ENCODE measurements at regions of chr18 and their contacts with region 1.

Region 1: GRCh38 chr18:55234366-55235093 is 275.3 kb upstream of the CCDC68 start:
- DNase-seq: peak; percentile 52
- H3K4me3 ChIP-seq: no peak overlapping the region; a peak in 1 of 4 replicates
- H3K27ac ChIP-seq: peak overlapping the region in 1 of 2 experiments; percentile 80; a peak in 2 of 4 replicates
- H3K4me1 ChIP-seq: peaks cover 6 to 21% of the 10 kb centered on the region in 2 experiments; a peak in 3 of 4 replicates
- H3K27me3 ChIP-seq: no peaks in the 10 kb centered on the region
- CTCF ChIP-seq: peak; percentile 89
- EP300 ChIP-seq: no peak; a peak in 1 of 4 replicates
- RAD21 ChIP-seq: peak; percentile 96

Region 2: DNA sequence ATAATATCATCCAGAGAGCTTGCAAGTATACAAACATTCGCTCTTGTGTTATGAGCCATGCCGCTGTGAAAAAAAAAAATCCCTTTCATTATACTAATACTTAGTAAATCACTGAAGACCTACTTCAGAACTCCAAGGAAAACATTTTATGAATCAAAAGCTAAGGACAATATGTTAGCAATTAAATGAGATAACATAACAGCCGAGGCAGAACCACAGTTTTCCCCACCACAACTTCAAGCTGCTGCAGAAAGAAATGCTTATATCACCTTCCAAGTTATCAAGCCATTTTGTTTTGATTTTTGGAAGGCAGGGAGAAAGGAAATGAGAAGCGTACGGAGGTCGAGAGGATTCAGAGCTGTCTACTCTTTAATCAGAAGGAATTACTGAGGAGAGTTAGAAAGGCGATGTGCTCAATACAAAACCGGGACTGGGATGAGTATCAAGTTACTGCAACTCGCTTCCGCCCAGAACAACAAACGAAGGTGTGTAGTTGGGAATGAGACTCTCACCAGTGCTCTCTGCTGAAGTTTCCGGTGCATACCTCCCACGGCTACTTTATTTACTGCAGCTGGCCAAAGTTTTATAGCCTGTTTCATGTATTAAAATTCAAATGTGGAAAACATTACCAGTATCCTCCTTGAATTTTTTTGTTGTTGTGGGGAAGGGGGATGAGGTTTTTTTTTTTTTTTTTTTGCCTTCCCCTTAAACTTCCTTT is 16.9 kb after region 1 on chr18:
- CTCF ChIA-PET with region 1: interaction called, 27 read pairs
- POLR2A ChIA-PET with region 1: no interaction called
- DNase-seq: no peak
- H3K4me3 ChIP-seq: no peak overlapping the region; a peak in 1 of 4 replicates
- H3K27ac ChIP-seq: peak overlapping the region; percentile 87 to 90
- H3K4me1 ChIP-seq: peaks cover 32 to 48% of the 10 kb centered on the region in 2 experiments
- H3K27me3 ChIP-seq: no peaks in the 10 kb centered on the region
- CTCF ChIP-seq: no peak
- EP300 ChIP-seq: no peak
- RAD21 ChIP-seq: no peak

Region 3: DNA sequence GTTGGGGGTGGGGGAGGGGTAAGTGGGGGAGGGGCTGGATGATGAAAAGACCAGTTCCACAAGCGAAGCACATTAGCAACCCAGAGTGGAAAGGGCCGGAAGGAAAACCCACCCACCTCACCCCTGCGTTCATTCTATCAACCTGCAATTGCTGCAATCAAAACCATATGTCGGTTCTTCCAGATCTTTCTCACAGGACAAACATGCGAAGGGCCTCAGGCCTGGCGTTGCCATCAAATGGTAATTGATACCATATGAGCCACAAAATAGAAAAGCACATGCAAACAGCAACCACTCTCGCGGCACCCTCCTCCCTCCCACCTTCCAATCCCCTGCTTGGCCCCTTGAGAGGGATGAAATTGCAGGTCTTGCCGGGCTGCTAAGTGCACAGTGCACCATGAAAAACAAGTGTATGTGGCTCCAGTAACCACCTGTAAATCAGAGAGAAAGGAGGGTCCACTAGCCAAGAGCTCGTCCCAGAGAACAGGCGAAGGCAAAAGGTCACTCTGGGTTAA is 65.9 kb after region 1 on chr18:
- CTCF ChIA-PET with region 1: interaction called, 28 read pairs
- POLR2A ChIA-PET with region 1: interaction called, 7 read pairs
- DNase-seq: peak; percentile 65
- H3K4me3 ChIP-seq: peak overlapping the region; percentile 46 to 66
- H3K27ac ChIP-seq: peak overlapping the region; percentile 92 to 100
- H3K4me1 ChIP-seq: peaks cover 14 to 67% of the 10 kb centered on the region in 2 experiments; a peak in 3 of 4 replicates
- H3K27me3 ChIP-seq: no peaks in the 10 kb centered on the region
- CTCF ChIP-seq: no peak
- EP300 ChIP-seq: peak; percentile 83 to 94
- RAD21 ChIP-seq: no peak; the same call in 1 of the 2 replicates

Region 4: DNA sequence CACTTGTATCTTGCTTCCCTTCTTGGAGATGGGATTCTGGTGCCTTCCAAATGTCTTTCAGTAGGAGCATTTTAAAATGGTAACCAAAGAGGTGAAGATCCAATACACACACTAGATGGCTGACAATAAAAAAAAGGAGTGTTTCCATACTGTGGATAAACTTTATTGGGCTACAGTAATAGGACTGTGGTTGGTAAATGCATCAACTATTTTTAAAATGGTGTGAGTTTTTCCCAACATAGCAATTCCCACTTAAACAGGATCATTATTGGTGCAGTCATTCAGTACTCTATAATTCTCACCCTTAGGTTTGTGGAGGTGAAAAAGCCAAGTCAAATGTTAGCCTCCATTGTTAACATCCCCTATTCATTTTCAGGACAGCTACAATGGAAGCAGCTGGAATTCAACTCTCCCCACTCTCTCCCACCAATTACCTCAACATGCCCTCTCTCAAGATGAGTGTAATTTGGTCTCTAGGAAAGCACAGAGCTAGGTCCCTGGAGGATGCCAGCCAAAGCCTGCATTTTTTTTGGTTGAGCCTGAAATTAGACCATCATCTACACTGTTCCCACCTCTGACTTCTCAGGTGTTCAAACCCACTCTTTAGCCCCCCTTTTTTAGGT is 80.2 kb after region 1 on chr18:
- CTCF ChIA-PET with region 1: interaction called, 33 read pairs
- POLR2A ChIA-PET with region 1: interaction called, 7 read pairs
- DNase-seq: no peak
- H3K4me3 ChIP-seq: no peak overlapping the region
- H3K27ac ChIP-seq: peak overlapping the region; percentile 95 to 100; a peak in 3 of 4 replicates
- H3K4me1 ChIP-seq: peaks cover 38 to 65% of the 10 kb centered on the region in 2 experiments; a peak in 3 of 4 replicates
- H3K27me3 ChIP-seq: no peaks in the 10 kb centered on the region
- CTCF ChIP-seq: no peak
- EP300 ChIP-seq: no peak
- RAD21 ChIP-seq: no peak

Region 5: DNA sequence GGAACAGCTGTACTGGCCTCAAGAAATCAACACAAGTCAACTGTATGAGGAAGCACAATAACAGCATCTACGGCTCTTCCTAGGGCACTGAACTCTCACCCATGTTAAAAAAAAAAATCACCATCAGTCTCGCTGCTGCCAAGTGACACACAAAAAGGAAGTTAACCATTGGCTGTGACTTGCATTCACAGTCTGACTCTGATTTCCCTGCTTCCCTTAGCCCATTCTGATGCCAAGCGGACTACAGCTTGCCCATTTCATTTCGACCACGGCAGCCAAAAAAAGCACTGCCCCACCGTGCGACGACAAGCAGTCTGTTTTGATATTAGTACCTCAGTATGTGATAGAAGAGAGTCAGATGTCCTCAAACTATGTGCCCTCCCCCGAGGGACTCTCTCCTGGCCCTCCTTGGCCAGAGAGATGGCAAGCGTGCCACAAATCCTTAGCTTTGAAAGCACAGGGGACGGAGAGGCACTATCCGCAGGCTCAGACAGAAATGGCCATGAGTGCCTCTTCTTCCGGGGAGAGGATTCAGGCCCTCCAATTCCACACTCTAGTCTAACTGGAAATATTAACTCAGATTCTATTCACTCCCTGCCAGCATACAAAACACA is 103.5 kb after region 1 on chr18:
- CTCF ChIA-PET with region 1: interaction called, 31 read pairs
- POLR2A ChIA-PET with region 1: no interaction called
- DNase-seq: no peak
- H3K4me3 ChIP-seq: peak overlapping the region; percentile 21 to 53
- H3K27ac ChIP-seq: peak overlapping the region; percentile 82 to 98
- H3K4me1 ChIP-seq: peaks cover 47 to 55% of the 10 kb centered on the region in 2 experiments
- H3K27me3 ChIP-seq: no peaks in the 10 kb centered on the region
- CTCF ChIP-seq: no peak
- EP300 ChIP-seq: no peak
- RAD21 ChIP-seq: no peak

Region 6: GRCh38 chr18:55405893-55406406 is 171.4 kb after region 1 on chr18:
- CTCF ChIA-PET with region 1: interaction called, 19 read pairs
- POLR2A ChIA-PET with region 1: no interaction called
- DNase-seq: peak; percentile 52
- H3K4me3 ChIP-seq: peak overlapping the region; percentile 48 to 65
- H3K27ac ChIP-seq: peak overlapping the region; percentile 95 to 99
- H3K4me1 ChIP-seq: peaks cover 41 to 50% of the 10 kb centered on the region in 2 experiments
- H3K27me3 ChIP-seq: no peaks in the 10 kb centered on the region
- CTCF ChIP-seq: peak; percentile 37
- EP300 ChIP-seq: peak; percentile 77 to 89
- RAD21 ChIP-seq: peak; percentile 49

Region 7: DNA sequence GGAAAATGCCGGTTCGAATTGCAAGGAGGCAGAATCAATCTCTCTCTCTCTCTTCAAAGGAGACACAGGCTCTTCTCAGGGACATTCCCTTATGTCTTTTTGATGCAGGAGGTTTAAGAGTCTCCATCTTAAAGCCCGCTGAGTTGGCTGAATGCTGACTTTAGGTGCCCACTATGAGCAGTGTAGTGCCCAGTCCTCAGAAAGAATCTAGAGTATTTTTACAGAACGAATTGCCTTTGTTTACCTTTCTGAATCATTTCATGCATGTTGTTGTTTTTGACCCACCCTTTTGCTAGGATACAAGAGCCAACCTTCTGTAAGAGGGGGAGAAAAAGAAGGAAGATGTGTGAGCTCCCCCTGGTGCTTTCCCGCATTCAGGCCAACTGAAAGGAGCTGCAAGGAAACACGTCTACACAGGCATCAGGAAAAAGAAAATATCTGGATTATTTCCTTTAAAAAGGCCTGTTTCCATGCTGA is 547.0 kb after region 1 on chr18:
- CTCF ChIA-PET with region 1: interaction called, 17 read pairs
- POLR2A ChIA-PET with region 1: interaction called, 3 read pairs
- DNase-seq: peak; percentile 74
- H3K4me3 ChIP-seq: no peak overlapping the region; a peak in 1 of 4 replicates
- H3K27ac ChIP-seq: peak overlapping the region in 1 of 2 experiments; percentile 50; a peak in 2 of 4 replicates
- H3K4me1 ChIP-seq: peaks cover 0 to 10% of the 10 kb centered on the region in 2 experiments; a peak in 3 of 4 replicates
- H3K27me3 ChIP-seq: no peaks in the 10 kb centered on the region
- CTCF ChIP-seq: peak; percentile 79
- EP300 ChIP-seq: no peak
- RAD21 ChIP-seq: peak; percentile 92